ENCODE measurements at regions of chr15 and their contacts with region 1.

Region 1: DNA sequence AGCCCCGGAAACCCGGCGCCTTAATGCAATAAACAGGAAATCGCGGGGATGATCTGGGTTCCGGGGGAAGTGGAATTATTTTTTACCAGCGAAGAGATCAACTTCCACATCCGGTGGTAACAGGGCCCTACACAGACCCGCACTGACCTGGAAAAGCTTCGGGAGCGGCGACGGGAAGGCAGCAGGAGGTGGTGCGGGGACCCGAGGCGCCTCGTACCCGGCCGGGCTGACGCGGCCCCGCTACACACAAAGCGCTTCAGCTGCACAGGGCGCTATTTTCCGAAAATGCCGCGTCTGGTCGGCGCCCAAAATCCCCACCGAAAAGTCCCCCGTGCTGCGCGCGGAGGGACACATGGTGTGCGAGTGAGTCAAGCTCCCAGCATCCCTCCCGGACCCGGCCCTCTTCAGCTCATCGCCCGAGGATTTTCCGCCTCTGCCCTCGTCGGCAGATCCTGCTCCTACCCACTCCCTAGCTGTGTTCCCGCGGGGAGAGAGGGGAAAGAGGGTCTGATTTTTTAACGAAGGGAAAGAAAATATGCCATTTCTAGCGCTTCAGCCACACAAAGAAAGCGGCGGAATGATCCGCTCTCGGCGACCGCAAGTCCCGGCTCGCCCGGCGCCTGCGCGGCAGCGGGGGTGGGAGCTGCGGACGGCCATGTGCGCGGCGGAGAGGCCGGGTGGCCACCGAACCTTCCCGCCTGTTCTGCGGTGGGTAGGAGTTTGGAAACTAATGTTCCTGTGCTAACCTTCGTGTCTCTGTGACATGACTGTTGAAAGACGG is at the start of gene GABPB1:
- DNase-seq: peak; percentile 90
- H3K4me3 Mint-ChIP-seq: peak within 1 kb of the TSS; percentile 98
- H3K27ac Mint-ChIP-seq: peak within 1 kb of the TSS; percentile 100
- H3K4me1 Mint-ChIP-seq: peaks cover 50% of the 10 kb centered on the region
- H3K27me3 Mint-ChIP-seq: no peaks in the 10 kb centered on the region
- total RNA-seq, gene GABPB1: 48.2 to 53.5 TPM

Region 2: DNA sequence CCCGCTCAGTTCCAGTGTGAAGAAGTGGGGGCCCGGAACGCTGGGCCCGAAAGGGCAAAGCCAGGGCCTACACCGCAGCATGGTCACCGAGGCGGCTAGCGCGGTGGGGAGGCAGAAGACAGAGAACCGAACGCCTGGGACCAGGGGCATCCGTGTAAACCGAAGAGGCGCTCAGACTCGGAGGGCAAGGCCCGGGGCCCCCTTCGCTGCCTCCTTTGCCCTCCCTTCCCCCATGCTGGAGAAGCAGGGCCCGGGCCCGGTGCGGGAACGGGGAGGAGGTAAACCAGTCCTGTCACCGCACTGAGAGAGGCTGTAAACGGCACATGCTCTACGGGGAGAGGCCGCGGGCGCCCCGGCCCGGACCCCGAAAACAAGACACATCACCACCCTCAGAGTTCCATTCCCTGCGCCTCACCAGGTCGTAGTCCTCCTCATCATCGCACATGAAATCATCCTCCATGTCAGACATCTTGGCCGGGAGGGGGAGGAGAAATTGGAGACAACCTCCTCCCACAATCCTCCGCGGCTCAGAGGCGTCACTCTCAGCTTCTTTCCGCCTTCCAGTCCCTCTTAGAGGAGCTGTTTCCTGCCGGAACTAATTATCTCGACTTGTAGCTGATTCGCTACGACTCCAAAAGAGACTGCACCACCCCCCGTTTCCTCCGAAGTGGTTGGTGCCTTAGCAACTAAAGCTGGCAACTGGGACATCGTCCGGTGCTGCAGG is 1199.8 kb before region 1 on chr15 and contains the start of gene COPS2:
- CTCF ChIA-PET with region 1: no interaction called
- intact Hi-C with region 1: loop called (anchors 1 kb)
- DNase-seq: peak; percentile 97
- H3K4me3 Mint-ChIP-seq: peak within 1 kb of the TSS; percentile 98
- H3K27ac Mint-ChIP-seq: peak within 1 kb of the TSS; percentile 97
- H3K4me1 Mint-ChIP-seq: peaks cover 41% of the 10 kb centered on the region
- H3K27me3 Mint-ChIP-seq: no peaks in the 10 kb centered on the region
- total RNA-seq, gene COPS2: 79.7 to 86.4 TPM

Region 3: GRCh38 chr15:49558924-49559323 is 796.1 kb before region 1 on chr15:
- CTCF ChIA-PET with region 1: no interaction called
- intact Hi-C with region 1: no loop called
- DNase-seq: no peak
- H3K4me3 Mint-ChIP-seq: no peak overlapping the region
- H3K27ac Mint-ChIP-seq: no peak overlapping the region
- H3K4me1 Mint-ChIP-seq: no peaks in the 10 kb centered on the region
- H3K27me3 Mint-ChIP-seq: no peaks in the 10 kb centered on the region

Region 4: GRCh38 chr15:50247819-50248655 is 107.0 kb before region 1 on chr15:
- CTCF ChIA-PET with region 1: no interaction called
- intact Hi-C with region 1: loop called (anchors 1 kb)
- DNase-seq: peak; percentile 88
- H3K4me3 Mint-ChIP-seq: peak overlapping the region; percentile 81
- H3K27ac Mint-ChIP-seq: peak overlapping the region; percentile 99
- H3K4me1 Mint-ChIP-seq: peaks cover 42% of the 10 kb centered on the region
- H3K27me3 Mint-ChIP-seq: no peaks in the 10 kb centered on the region

Region 5: GRCh38 chr15:50330921-50331320 is 24.1 kb before region 1 on chr15:
- CTCF ChIA-PET with region 1: interaction called, 4 read pairs
- intact Hi-C with region 1: loop called (anchors 1 kb)
- DNase-seq: no peak
- H3K4me3 Mint-ChIP-seq: no peak overlapping the region
- H3K27ac Mint-ChIP-seq: no peak overlapping the region
- H3K4me1 Mint-ChIP-seq: peaks cover 19% of the 10 kb centered on the region
- H3K27me3 Mint-ChIP-seq: no peaks in the 10 kb centered on the region

Region 6: DNA sequence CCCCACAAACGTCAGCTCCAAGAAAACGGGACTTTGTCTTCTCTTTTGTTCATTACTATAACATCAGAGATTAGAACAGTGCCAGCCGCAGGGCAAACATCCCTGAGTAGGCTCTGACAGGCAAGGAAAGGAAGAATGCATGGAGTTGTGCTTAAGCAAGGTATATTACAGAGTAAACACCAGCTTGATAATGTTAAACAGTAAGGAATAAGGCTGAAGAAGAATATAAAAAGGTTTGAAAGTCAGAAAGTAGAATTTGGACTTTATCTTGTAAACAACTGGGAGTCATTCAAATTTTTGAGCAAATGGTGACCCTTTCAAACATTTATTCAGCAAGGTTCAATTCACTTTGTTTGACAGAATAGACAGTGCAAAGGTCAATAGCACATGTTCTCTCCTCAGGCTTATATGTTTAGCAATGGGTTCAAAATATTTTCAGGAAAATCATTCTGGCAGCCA is 11.0 kb before region 1 on chr15:
- CTCF ChIA-PET with region 1: no interaction called
- intact Hi-C with region 1: no loop called
- DNase-seq: no peak
- H3K4me3 Mint-ChIP-seq: no peak overlapping the region
- H3K27ac Mint-ChIP-seq: no peak overlapping the region
- H3K4me1 Mint-ChIP-seq: peaks cover 40% of the 10 kb centered on the region
- H3K27me3 Mint-ChIP-seq: no peaks in the 10 kb centered on the region

Region 7: GRCh38 chr15:50686468-50687301 is 331.7 kb after region 1 on chr15 and contains the start of gene TRPM7:
- CTCF ChIA-PET with region 1: no interaction called
- intact Hi-C with region 1: loop called (anchors 1 kb)
- DNase-seq: peak; percentile 87
- H3K4me3 Mint-ChIP-seq: peak within 1 kb of the TSS; percentile 99
- H3K27ac Mint-ChIP-seq: peak within 1 kb of the TSS; percentile 98
- H3K4me1 Mint-ChIP-seq: peaks cover 52% of the 10 kb centered on the region
- H3K27me3 Mint-ChIP-seq: no peaks in the 10 kb centered on the region
- total RNA-seq, gene TRPM7: 31.1 to 32.7 TPM

Region 8: GRCh38 chr15:51077221-51078153 is 722.5 kb after region 1 on chr15:
- CTCF ChIA-PET with region 1: no interaction called
- intact Hi-C with region 1: loop called (anchors 2 kb)
- DNase-seq: peak; percentile 91
- H3K4me3 Mint-ChIP-seq: peak overlapping the region; percentile 68
- H3K27ac Mint-ChIP-seq: peak overlapping the region; percentile 85
- H3K4me1 Mint-ChIP-seq: peaks cover 24% of the 10 kb centered on the region
- H3K27me3 Mint-ChIP-seq: peaks cover 8% of the 10 kb centered on the region